ENCODE measurements at regions of chr6 and their contacts with region 1.

Region 1: GRCh38 chr6:119110601-119111548 is 32.4 kb upstream of the FAM184A start:
- DNase-seq: peak; percentile 89
- H3K4me3 Mint-ChIP-seq: no peak overlapping the region
- H3K27ac Mint-ChIP-seq: no peak overlapping the region
- H3K4me1 Mint-ChIP-seq: peaks cover 12% of the 10 kb centered on the region
- H3K27me3 Mint-ChIP-seq: no peaks in the 10 kb centered on the region

Region 2: GRCh38 chr6:117976030-117976651 is 1134.7 kb before region 1 on chr6:
- intact Hi-C with region 1: loop called (anchors 10 kb)
- DNase-seq: peak; percentile 71
- H3K4me3 Mint-ChIP-seq: no peak overlapping the region
- H3K27ac Mint-ChIP-seq: no peak overlapping the region
- H3K4me1 Mint-ChIP-seq: no peaks in the 10 kb centered on the region
- H3K27me3 Mint-ChIP-seq: peaks cover 10% of the 10 kb centered on the region

Region 3: DNA sequence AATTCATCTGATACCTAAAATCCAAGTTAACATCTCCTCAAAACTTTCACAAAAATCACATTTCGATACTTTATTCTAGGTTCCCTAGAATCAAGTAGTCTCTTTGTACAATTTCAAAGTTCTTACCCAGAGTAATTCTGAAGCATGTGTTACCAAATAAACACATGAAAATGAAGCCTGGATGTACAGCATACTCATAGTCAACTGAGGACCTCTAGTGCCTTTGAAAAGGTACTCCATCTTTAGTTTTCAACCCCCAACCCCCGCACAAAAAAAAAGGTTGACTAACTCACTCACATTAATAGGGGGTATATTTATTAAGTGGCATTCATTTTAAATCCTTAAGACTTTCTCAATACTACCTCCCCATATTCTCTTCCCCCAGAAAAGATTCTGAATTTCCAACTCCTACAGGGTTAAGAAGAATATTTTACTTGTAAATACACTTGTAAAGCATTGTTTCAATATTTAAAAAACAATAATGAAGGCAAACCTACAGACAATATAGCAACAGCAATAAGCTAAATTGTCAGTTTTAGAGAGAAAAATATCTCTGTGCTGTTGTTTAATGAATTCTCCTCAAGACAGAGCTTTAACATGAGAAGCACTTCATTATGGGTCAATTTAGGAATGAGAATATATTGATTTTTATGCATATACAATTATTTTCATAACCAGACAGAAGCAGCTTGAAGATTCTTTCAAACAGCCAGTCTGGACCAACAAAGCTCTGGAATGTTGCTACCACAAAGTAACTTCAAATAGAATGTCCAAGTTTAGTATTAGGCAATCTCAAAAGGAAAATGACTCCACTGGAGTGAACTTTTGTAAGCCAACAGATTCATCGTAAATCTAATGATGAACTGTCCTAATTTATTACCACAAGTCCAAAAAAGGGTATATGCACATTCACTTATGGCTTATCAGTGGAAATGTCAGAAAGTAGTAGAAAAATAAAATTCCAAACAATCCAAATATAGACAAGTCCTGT is 559.5 kb before region 1 on chr6:
- intact Hi-C with region 1: loop called (anchors 10 kb)
- DNase-seq: peak; percentile 72
- H3K4me3 Mint-ChIP-seq: no peak overlapping the region
- H3K27ac Mint-ChIP-seq: peak overlapping the region; percentile 15
- H3K4me1 Mint-ChIP-seq: peaks cover 5% of the 10 kb centered on the region
- H3K27me3 Mint-ChIP-seq: no peaks in the 10 kb centered on the region

Region 4: DNA sequence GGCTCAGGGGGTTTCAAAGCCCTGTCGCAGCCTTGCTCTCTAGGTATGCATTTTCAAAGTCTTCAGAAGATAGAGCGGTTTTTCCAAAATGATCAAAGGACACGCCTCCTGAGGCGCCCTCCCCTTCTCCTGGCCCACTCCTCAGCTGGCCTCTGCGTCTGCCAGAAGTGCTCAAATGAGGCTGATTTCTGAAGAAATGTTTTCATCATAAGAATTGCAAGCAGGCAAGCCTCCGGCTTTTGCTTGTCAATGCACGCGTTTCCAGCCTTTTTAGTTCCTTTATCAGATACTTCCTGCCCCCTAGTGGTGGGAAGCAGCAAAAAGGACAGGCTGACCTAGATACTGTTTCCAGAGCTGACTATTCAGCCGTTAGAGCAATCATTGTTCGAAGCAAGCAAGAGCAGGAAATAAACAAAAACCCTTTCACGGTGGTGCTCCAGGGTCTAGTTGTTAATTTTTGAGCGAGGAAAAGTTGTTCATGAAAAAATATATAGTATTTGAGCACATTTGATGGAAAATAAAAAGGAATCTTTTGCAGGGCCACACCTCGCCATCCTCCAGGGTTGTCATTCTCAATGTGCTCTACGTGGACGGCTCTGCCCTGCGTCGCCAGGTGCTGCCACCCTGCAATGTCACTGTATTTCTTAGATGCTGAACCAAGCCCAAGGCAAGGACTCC is 310.3 kb before region 1 on chr6:
- intact Hi-C with region 1: loop called (anchors 2 kb)
- DNase-seq: peak; percentile 95
- H3K4me3 Mint-ChIP-seq: peak overlapping the region; percentile 60
- H3K27ac Mint-ChIP-seq: peak overlapping the region; percentile 51
- H3K4me1 Mint-ChIP-seq: peaks cover 30% of the 10 kb centered on the region
- H3K27me3 Mint-ChIP-seq: no peaks in the 10 kb centered on the region

Region 5: DNA sequence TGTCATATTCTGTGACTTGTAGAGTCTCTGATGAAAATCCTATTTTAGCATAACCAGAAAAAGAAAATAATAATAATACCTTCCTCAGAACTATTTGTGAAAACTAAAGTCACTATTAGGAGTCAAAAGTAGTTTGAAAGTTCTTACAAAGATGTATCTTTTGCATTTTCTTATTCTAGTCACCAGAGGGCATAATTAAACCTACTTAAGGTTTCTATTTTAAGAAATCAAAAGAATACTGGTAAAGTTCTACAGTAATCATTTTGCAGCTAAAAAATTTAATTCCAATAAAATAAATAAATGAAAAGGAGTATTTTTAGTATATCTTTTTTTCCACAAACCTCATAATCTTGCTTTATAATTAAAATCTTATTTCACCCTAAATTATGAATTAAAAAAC is 147.9 kb before region 1 on chr6:
- intact Hi-C with region 1: loop called (anchors 1 kb)
- DNase-seq: no peak
- H3K4me3 Mint-ChIP-seq: no peak overlapping the region
- H3K27ac Mint-ChIP-seq: no peak overlapping the region
- H3K4me1 Mint-ChIP-seq: peaks cover 9% of the 10 kb centered on the region
- H3K27me3 Mint-ChIP-seq: no peaks in the 10 kb centered on the region

Region 6: DNA sequence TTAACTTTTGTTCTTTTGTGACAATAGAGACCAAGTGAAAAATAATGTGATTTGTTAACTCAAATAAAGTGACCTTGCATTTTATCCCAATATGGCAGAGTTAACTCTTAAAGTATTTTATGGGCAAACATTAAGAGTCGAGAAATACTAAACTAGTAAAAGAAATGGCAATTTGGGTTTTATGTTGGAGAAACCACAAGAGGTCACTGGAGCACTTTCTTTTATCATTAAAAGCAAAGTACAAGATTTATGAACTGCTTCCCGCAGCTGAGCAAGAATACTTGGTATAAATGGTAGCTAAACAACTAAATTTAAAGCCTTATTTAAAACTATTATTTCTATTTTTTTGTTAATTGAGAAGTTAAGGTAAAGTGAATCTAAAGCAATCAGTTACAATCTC is 142.5 kb before region 1 on chr6:
- intact Hi-C with region 1: loop called (anchors 1 kb)
- DNase-seq: no peak
- H3K4me3 Mint-ChIP-seq: no peak overlapping the region
- H3K27ac Mint-ChIP-seq: no peak overlapping the region
- H3K4me1 Mint-ChIP-seq: no peaks in the 10 kb centered on the region
- H3K27me3 Mint-ChIP-seq: no peaks in the 10 kb centered on the region

Measured in activated CD4-positive, alpha-beta T cell treated with anti-CD3 and anti-CD28 coated beads, Interleukin-2, amount 10 ng/mL, durations not matched to agents 24 days and 14 days (primary cell).